ENCODE measurements at regions of chr11 and their contacts with region 1.

Region 1: GRCh38 chr11:30902929-30903328 is 316.8 kb upstream of the MPPED2 start:
- DNase-seq: no peak

Region 2: GRCh38 chr11:30206249-30206996 is 696.5 kb before region 1 on chr11:
- intact Hi-C with region 1: loop called in 1 of 2 experiments (anchors 10 kb)
- DNase-seq: no peak

Region 3: GRCh38 chr11:30816959-30817880 is 85.7 kb before region 1 on chr11:
- intact Hi-C with region 1: no loop called
- DNase-seq: no peak

Region 4: DNA sequence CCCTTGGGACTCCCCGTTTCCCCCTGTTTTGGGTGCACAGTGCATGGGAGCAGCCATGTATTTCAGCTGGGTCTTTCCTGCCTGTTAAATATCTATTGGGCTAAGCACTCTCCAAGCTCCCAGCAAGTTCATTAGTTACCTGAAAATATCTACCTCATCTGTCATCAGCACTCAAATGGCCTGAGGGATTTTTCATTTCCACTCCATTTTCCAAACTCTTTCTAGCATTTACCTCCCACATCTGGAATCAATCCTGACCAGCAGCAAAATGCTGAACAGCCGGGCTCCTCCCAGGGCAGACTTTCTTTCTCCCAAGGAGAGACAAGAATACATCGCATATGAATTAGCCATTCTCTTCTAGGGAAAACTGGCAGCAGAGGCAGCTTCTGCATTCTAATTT is 43.3 kb before region 1 on chr11:
- intact Hi-C with region 1: no loop called
- DNase-seq: no peak

Region 5: GRCh38 chr11:30935861-30936260 is 32.9 kb after region 1 on chr11:
- intact Hi-C with region 1: no loop called
- DNase-seq: no peak

Measured in posterior vena cava (tissue), 2 donors.